Esophagus muscularis mucosa (tissue), 4 donors: ENCODE measurements at regions of chr4 and their contacts with region 1.

Region 1: DNA sequence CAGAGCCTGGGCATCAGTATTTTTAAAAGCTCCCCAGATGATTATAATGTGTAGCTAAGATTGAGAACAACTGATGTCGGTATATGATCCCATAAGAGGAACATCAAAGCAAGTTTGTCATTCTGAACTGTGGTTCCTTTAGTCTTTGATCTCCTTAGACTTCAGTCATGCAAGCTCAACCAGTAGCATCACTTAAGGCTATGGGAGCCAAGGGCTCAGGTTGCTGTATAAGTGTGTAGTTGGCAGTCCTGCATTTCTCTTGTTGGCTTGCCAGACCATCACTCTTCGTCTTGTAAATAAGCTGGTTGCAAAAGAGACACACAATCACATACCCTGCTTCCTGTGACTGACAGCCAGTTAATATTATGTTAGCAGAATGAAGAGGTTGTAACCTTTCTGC is 82.7 kb downstream of the PGRMC2 start:
- DNase-seq: no peak
- H3K4me3 ChIP-seq: no peak overlapping the region
- H3K27ac ChIP-seq: no peak overlapping the region
- H3K4me1 ChIP-seq: no peaks in the 10 kb centered on the region
- H3K27me3 ChIP-seq: no peaks in the 10 kb centered on the region
- CTCF ChIP-seq: no peak
- EP300 ChIP-seq: no peak
- POLR2A ChIP-seq: no peak

Region 2: GRCh38 chr4:128444544-128445302 is 239.8 kb after region 1 on chr4:
- intact Hi-C with region 1: loop called (anchors 10 kb)
- DNase-seq: no peak
- H3K4me3 ChIP-seq: no peak overlapping the region
- H3K27ac ChIP-seq: no peak overlapping the region
- H3K4me1 ChIP-seq: no peaks in the 10 kb centered on the region
- H3K27me3 ChIP-seq: no peaks in the 10 kb centered on the region
- CTCF ChIP-seq: no peak
- EP300 ChIP-seq: no peak
- POLR2A ChIP-seq: no peak